Right ventricle myocardium inferior (tissue), 1 donor: ENCODE measurements at regions of chr17 and their contacts with region 1.

Region 1: GRCh38 chr17:43170766-43171585 is at the start of gene NBR1:
- DNase-seq: peak; percentile 94
- ATAC-seq: peak; percentile 92
- total RNA-seq, gene NBR1: 96.9 TPM

Region 2: DNA sequence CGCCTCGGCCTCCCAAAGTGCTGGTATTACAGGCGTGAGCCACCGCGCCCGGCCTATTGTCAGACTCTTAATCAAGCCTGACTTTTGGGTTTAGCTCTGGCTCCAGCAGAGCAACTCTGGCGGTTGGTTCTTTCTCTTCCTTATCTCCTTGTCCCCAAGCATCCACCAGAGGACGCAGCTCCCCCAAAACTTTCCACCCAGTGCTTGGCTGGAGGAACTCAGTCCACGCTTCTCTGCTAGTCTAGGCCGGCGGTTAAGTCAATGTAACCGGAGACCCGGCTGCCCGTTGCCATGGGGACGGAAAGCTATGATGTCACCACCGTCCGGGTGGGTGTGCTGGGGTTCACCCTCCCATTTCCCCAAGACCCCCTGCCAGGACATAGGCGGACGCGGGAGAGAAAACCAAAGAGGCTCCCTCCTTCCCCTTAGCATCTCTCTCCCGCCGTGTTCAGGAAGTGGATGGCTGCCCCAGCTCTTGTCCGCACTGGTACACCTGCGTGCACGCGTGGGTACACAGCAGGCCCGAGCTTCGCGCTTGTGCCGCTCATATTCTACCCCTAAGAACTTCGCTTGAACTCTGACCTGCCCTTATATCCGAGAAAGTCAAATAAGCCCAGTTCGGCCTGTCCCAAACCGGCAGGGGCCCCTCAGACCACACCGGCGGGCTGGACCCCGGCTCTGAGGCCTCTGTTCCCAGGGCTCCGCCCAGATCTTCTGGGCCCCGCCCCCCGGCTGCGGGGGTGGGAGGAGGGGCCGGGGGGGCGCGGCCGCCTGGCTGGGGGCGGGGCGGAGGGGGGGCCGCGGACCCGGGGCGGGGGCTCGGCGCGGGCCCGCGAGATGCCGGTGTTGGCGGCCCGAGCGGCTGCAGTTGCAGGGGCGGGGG is 146.3 kb before region 1 on chr17 and contains the start of gene RND2:
- intact Hi-C with region 1: loop called (anchors 2 kb)
- DNase-seq: peak; percentile 90
- ATAC-seq: peak; percentile 73
- total RNA-seq, gene RND2: 1.5 TPM

Region 3: GRCh38 chr17:43125133-43125966 is 45.6 kb before region 1 on chr17 and contains the start of gene BRCA1:
- intact Hi-C with region 1: loop called (anchors 1 kb)
- DNase-seq: peak; percentile 96
- ATAC-seq: peak; percentile 99
- total RNA-seq, gene BRCA1: 7.9 TPM

Region 4: GRCh38 chr17:43224146-43224695 is 53.2 kb after region 1 on chr17:
- intact Hi-C with region 1: no loop called
- DNase-seq: no peak
- ATAC-seq: no peak

Region 5: GRCh38 chr17:43324205-43324893 is 153.4 kb after region 1 on chr17:
- intact Hi-C with region 1: no loop called
- DNase-seq: no peak
- ATAC-seq: no peak